AG04450 (cell line): ENCODE measurements at regions of chr3 and their contacts with region 1.

Region 1: DNA sequence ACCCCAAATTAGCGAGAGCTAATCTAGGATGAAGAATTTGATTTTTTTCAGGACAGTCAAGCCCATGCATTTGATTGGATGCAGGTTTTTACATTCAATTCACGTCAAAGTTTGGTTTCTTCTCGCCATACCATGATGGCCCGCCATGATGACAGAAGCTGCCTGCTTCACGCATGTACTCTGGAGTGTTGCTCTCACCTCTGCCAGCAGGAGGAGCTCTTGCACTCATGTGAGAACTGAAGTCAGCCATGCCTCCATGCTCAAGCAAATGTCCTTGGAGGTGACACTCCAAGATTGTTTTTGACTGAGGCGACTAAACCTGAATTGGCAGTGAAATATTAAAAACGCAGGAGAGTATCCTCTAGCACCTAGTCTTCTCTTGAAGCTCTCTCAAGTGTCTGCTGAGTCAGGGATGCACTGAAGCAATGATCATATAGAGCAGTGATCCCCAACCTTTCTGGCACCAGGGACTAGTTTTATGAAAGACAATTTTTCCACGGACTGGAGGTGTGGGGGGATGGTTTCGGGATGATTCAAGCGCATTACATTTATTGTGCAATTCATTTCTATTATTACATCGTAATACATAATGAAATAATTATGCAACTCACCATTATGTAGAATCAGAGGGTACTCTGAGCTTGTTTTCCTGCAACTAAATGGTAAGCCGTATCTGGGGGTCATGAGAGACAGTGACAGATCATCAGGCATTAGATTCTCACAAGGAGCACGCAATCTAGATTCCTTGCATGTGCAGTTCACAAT is 121.0 kb downstream of the SAMMSON start:
- DNase-seq: peak; percentile 10
- H3K4me3 ChIP-seq: no peak overlapping the region
- H3K27ac ChIP-seq: no peak overlapping the region
- H3K27me3 ChIP-seq: no peaks in the 10 kb centered on the region
- CTCF ChIP-seq: peak; percentile 64

Region 2: GRCh38 chr3:70108072-70108471 is 12.5 kb before region 1 on chr3:
- CTCF ChIA-PET with region 1: interaction called, 23 read pairs
- POLR2A ChIA-PET with region 1: no interaction called
- DNase-seq: no peak
- H3K4me3 ChIP-seq: no peak overlapping the region
- H3K27ac ChIP-seq: no peak overlapping the region
- H3K27me3 ChIP-seq: no peaks in the 10 kb centered on the region
- CTCF ChIP-seq: peak; percentile 61

Region 3: DNA sequence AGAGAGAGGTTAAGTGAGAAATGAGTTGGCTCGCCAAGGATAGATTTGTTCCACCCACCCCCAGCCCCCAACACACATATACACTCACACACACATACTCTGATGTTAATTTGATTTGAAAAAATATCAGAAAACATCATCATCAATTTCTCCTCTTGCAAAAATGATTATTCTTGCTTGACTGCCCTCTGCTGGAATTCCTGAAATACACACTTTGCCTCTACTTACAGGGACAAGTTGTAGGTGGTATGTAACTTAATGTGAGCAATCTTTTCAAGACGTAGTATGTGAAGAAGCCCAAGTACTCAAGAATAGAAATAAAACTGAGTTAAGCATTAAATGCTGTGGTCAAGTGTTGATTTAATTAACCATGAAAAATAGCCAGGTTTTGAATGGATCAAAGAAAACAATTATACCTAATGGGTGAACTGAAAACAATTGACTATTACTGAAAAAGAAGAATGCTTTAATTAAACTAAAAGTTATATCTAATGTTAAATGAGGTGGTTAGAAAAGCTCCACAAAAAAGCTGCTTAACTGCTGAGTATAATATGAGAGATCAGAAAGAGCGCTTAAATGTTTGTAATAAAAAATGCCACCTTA is 238.5 kb after region 1 on chr3:
- CTCF ChIA-PET with region 1: interaction called, 30 read pairs
- POLR2A ChIA-PET with region 1: no interaction called
- DNase-seq: peak; percentile 11
- H3K4me3 ChIP-seq: no peak overlapping the region
- H3K27ac ChIP-seq: no peak overlapping the region
- H3K27me3 ChIP-seq: no peaks in the 10 kb centered on the region
- CTCF ChIP-seq: peak; percentile 75